ENCODE measurements at regions of chr4 and their contacts with region 1.

Region 1: DNA sequence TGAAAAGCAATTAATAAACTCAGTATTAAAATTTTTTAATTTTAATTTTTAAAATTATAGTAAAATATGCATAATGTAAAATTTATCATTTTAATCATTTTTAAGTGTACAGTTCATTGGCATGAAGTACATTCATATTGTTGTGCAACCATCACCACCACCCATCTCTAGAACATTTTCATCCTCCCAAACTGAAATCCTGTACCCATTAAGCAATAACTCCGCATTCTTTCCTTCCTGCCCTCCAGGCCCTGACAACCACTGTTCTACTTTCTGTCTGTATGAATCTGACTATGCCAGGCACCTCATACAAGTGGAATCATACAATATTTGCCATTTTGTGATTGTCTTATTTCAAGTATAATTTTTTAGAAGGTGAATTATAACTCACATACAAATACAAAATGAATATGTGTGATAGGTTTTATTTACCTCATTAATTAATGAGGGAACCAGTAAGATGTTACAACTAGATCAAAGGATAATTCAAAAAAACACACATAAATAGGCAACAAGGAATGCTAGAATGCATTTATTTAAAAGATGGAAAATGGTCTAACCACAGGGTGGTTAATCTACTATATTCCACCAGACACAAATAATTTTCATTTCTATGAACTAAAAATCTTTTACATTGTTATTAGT is 13.1 kb upstream of the AFF1 start:
- DNase-seq: no peak
- ATAC-seq: peak; percentile 6
- H3K4me3 ChIP-seq: no peak overlapping the region
- H3K27ac ChIP-seq: no peak overlapping the region
- H3K4me1 ChIP-seq: peaks cover 0 to 45% of the 10 kb centered on the region in 2 donors
- H3K27me3 ChIP-seq: no peaks in the 10 kb centered on the region
- CTCF ChIP-seq: no peak

Region 2: GRCh38 chr4:87093443-87094123 is 171.9 kb after region 1 on chr4:
- intact Hi-C with region 1: loop called in 1 of 2 experiments (anchors 2 kb)
- DNase-seq: peak in 1 of 4 donors; percentile 60
- ATAC-seq: peak; percentile 72
- H3K4me3 ChIP-seq: no peak overlapping the region
- H3K27ac ChIP-seq: peak overlapping the region in 1 of 2 donors; percentile 60
- H3K4me1 ChIP-seq: peaks cover 12 to 49% of the 10 kb centered on the region in 2 donors
- H3K27me3 ChIP-seq: no peaks in the 10 kb centered on the region
- CTCF ChIP-seq: peak; percentile 50 to 55